ENCODE measurements at regions of chr1 and their contacts with region 1.

Region 1: DNA sequence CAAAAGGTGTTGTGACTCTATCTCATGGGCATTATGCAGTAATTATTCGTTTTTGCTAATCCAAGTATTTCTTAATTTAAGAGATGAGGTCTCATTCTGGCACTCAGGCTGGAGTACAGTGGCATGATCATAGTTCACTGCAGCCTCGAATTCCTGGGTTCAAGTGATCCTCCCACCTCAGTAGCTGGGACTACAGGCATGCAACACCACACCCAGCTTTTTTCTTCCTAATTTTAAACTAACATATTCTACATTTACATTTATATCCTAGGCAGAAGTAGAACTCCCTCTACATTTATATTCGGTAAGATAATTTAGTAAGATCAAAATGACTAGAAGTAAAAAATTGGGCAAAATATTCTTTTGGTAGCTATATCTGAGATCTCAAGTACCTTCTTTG is 50.5 kb upstream of the RBM34 start:
- DNase-seq: no peak
- ATAC-seq: no peak
- H3K4me3 ChIP-seq: no peak overlapping the region
- H3K27ac ChIP-seq: no peak overlapping the region
- H3K4me1 ChIP-seq: peaks cover 0 to 12% of the 10 kb centered on the region in 2 experiments; a peak in 2 of 5 replicates
- H3K27me3 ChIP-seq: no peaks in the 10 kb centered on the region
- CTCF ChIP-seq: no peak
- EP300 ChIP-seq: no peak
- POLR2A ChIP-seq: no peak
- RAD21 ChIP-seq: no peak

Region 2: DNA sequence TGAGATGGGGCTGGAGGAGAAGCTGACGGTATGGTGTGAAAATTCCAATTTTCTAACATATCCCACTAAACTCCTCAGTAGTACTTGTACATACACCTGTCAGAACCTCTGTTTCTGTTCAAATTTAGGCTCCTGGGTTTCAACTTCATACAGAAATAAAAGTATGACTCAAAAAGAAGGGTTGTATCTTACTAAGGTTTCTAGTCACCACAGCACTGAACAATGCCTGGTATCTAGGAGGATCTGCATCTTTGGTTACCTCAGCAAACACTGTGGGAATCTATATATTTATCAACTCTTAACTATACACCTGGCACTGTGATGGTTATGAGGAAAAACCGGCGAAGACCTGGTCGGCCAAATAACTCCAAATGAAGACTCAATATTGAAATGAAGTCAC is 64.2 kb before region 1 on chr1:
- CTCF ChIA-PET with region 1: no interaction called
- POLR2A ChIA-PET with region 1: no interaction called
- in situ Hi-C with region 1: no loop called
- intact Hi-C with region 1: no loop called
- DNase-seq: no peak
- ATAC-seq: no peak
- H3K4me3 ChIP-seq: no peak overlapping the region
- H3K27ac ChIP-seq: no peak overlapping the region
- H3K4me1 ChIP-seq: no peaks in the 10 kb centered on the region
- H3K27me3 ChIP-seq: no peaks in the 10 kb centered on the region
- CTCF ChIP-seq: no peak
- EP300 ChIP-seq: no peak
- POLR2A ChIP-seq: no peak
- RAD21 ChIP-seq: no peak

Region 3: GRCh38 chr1:235225299-235225698 is 13.8 kb after region 1 on chr1:
- CTCF ChIA-PET with region 1: no interaction called
- POLR2A ChIA-PET with region 1: interaction called, 10 read pairs
- in situ Hi-C with region 1: no loop called
- intact Hi-C with region 1: no loop called
- DNase-seq: no peak
- ATAC-seq: no peak
- H3K4me3 ChIP-seq: no peak overlapping the region
- H3K27ac ChIP-seq: no peak overlapping the region
- H3K4me1 ChIP-seq: no peaks in the 10 kb centered on the region
- H3K27me3 ChIP-seq: no peaks in the 10 kb centered on the region
- CTCF ChIP-seq: no peak
- EP300 ChIP-seq: no peak
- POLR2A ChIP-seq: no peak
- RAD21 ChIP-seq: no peak